ENCODE measurements at regions of chr12 and their contacts with region 1.

Region 1: DNA sequence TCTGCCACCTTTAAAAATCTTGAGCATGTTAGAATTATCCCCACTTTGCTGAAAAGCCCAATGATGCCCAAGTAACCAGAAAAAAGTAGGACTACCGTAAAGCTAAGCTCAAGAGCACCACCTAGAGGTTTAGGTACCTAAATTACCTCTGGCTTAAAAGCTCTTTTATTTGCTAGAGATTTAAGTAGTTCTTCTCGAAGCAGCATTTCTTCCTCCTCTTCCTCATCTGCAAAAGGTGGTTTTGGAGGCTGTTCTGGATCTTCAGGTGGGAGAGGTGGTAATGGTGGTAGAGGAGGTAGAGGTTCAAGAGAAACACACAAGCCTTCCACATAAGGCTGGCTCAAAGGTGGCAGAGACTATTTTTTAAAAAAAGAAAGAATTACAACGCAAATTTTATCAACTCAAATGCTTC is 26.9 kb downstream of the ZFC3H1 start:
- DNase-seq: no peak
- ATAC-seq: no peak
- H3K4me3 ChIP-seq: no peak overlapping the region
- H3K27ac ChIP-seq: no peak overlapping the region
- H3K4me1 ChIP-seq: no peaks in the 10 kb centered on the region
- H3K27me3 ChIP-seq: no peaks in the 10 kb centered on the region
- CTCF ChIP-seq: peak in 4 of 5 experiments; percentile 22 to 69 (median 58)
- POLR2A ChIP-seq: no peak

Region 2: GRCh38 chr12:71610031-71610795 is 26.5 kb before region 1 on chr12:
- in situ Hi-C with region 1: no loop called
- intact Hi-C with region 1: no loop called
- DNase-seq: no peak
- ATAC-seq: no peak
- H3K4me3 ChIP-seq: no peak overlapping the region
- H3K27ac ChIP-seq: no peak overlapping the region
- H3K4me1 ChIP-seq: no peaks in the 10 kb centered on the region
- H3K27me3 ChIP-seq: no peaks in the 10 kb centered on the region
- CTCF ChIP-seq: no peak
- POLR2A ChIP-seq: no peak

Region 3: GRCh38 chr12:71876137-71876799 is 239.6 kb after region 1 on chr12:
- in situ Hi-C with region 1: loop called in 1 of 4 experiments (anchors 25 kb)
- intact Hi-C with region 1: no loop called
- DNase-seq: no peak
- ATAC-seq: no peak
- H3K4me3 ChIP-seq: no peak overlapping the region
- H3K27ac ChIP-seq: peak overlapping the region in 2 of 4 donors; percentile 13 to 21
- H3K4me1 ChIP-seq: peaks cover 14 to 40% of the 10 kb centered on the region in 2 donors
- H3K27me3 ChIP-seq: no peaks in the 10 kb centered on the region
- CTCF ChIP-seq: no peak
- POLR2A ChIP-seq: no peak